Tibial artery (tissue), 4 donors: ENCODE measurements at regions of chr3 and their contacts with region 1.

Region 1: GRCh38 chr3:100103558-100104441 is 10.5 kb downstream of the FILIP1L start:
- DNase-seq: no peak
- H3K4me3 ChIP-seq: no peak overlapping the region
- H3K27ac ChIP-seq: peak overlapping the region; percentile 61 to 64
- H3K4me1 ChIP-seq: peaks cover 0 to 83% (median 45%) of the 10 kb centered on the region in 4 donors
- H3K27me3 ChIP-seq: no peaks in the 10 kb centered on the region
- CTCF ChIP-seq: no peak

Region 2: GRCh38 chr3:100159331-100160153 is 55.7 kb after region 1 on chr3:
- intact Hi-C with region 1: loop called (anchors 10 kb)
- DNase-seq: no peak
- H3K4me3 ChIP-seq: no peak overlapping the region
- H3K27ac ChIP-seq: peak overlapping the region; percentile 39 to 76
- H3K4me1 ChIP-seq: peaks cover 0 to 70% (median 50%) of the 10 kb centered on the region in 4 donors
- H3K27me3 ChIP-seq: no peaks in the 10 kb centered on the region
- CTCF ChIP-seq: no peak